MCF 10A (cell line): ENCODE measurements at regions of chr1 and their contacts with region 1.

Region 1: DNA sequence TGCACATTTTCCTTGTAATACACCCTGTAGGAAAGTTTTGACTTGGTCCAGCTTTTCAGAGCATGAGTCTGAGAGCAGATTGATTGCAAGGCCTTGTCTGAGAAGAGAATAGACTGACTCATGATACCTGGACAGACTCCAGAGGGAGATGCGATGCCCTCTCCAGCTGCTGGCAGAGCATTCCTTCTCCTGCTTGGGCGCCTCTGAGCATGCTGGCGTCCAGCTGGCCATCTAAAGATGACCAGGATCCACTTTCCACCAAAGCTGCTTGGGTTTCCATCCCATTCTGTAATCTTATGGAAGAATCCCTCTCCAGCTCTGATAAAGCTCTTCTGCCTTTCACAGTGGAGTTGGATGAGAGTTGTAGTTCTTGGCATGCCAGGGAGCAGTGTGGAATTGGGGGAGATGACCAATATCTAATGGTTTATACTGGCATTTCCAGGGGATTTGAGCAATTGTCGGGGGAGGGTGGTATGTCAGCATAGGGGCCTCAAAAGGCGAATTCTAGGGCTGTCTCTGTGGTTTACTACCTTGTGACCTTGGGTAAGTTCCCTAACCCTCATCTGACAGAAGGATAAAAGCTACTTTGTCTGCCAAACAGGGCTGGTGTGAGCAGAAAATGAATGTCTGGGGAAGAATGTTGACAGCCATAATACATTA is 19.5 kb downstream of the SZRD1 start:
- DNase-seq: peak; percentile 89
- H3K4me3 Mint-ChIP-seq: no peak overlapping the region
- H3K27ac Mint-ChIP-seq: peak overlapping the region; percentile 86
- H3K4me1 Mint-ChIP-seq: peaks cover 30% of the 10 kb centered on the region
- H3K27me3 Mint-ChIP-seq: no peaks in the 10 kb centered on the region
- CTCF ChIP-seq: no peak

Region 2: GRCh38 chr1:15949453-15950245 is 436.9 kb before region 1 on chr1:
- CTCF ChIA-PET with region 1: no interaction called
- POLR2A ChIA-PET with region 1: no interaction called
- intact Hi-C with region 1: loop called (anchors 5 kb)
- DNase-seq: peak; percentile 95
- H3K4me3 Mint-ChIP-seq: peak overlapping the region; percentile 47
- H3K27ac Mint-ChIP-seq: peak overlapping the region; percentile 87
- H3K4me1 Mint-ChIP-seq: peaks cover 59% of the 10 kb centered on the region
- H3K27me3 Mint-ChIP-seq: no peaks in the 10 kb centered on the region
- CTCF ChIP-seq: no peak

Region 3: GRCh38 chr1:16375521-16376359 is 10.8 kb before region 1 on chr1:
- CTCF ChIA-PET with region 1: no interaction called
- POLR2A ChIA-PET with region 1: interaction called, 14 read pairs
- intact Hi-C with region 1: no loop called
- DNase-seq: peak; percentile 41
- H3K4me3 Mint-ChIP-seq: no peak overlapping the region
- H3K27ac Mint-ChIP-seq: peak overlapping the region; percentile 42
- H3K4me1 Mint-ChIP-seq: peaks cover 26% of the 10 kb centered on the region
- H3K27me3 Mint-ChIP-seq: no peaks in the 10 kb centered on the region
- CTCF ChIP-seq: no peak

Region 4: DNA sequence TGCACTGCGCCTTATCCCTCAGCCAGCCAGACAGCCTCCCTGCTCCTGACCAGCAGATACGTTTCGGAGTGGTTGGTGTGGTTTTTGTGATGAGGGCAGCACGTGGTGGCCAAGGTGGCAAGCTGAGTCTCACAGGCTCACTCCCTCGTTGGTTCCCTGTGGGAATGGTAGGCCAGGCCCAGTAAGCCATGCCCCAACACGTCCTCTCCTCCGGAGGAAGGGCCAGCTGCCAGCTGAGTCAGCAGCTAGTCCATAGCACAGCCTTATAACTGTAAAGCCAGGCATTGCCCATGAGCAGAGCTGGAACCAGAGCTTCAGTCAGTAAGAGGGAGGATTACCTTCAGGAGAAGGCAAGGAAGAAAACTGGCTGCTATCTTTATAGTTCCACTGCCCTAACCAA is 10.0 kb after region 1 on chr1:
- CTCF ChIA-PET with region 1: no interaction called
- POLR2A ChIA-PET with region 1: interaction called, 17 read pairs
- intact Hi-C with region 1: no loop called
- DNase-seq: peak; percentile 94
- H3K4me3 Mint-ChIP-seq: no peak overlapping the region
- H3K27ac Mint-ChIP-seq: peak overlapping the region; percentile 88
- H3K4me1 Mint-ChIP-seq: peaks cover 22% of the 10 kb centered on the region
- H3K27me3 Mint-ChIP-seq: no peaks in the 10 kb centered on the region
- CTCF ChIP-seq: no peak